ENCODE measurements at regions of chr4 and their contacts with region 1.

Region 1: DNA sequence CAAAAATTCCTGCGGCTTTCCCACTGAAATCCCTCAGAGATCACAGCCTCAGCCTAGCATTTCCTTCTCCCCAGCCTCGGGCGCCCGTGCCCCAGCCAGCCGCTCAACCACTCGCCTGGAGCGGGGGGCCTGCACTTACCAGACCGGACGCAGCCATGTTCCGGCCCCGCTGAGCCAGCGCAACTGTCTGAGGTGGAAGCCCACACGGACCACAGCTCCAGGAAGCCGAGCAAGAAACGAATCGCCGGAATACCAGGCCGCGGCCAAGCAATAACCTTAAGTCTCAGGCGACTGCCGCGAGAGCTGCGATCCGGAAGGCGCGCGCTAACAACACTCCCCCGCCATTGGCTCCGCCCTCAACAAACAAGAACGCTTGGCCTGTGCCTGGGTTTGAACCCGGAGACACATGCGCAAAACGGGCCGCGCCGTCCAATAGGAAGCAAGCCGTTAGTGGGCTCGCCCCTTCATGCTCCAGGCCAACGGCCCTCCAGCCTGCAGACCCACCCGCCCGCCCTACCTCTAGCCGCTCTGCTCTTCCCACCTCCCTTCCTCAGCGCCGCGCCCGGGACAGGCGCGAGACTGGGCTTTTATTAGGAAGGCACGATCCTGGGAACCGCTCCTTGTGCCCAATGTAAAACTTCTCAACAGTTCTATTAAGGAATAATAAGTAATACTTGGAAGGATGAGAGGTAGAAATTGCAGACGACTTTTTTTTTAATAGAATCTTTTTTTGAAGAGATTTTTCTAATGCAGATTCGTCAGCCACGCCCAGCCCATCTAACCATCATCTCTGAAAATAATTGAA is at the start of gene CENPC:
- DNase-seq: peak; percentile 93
- H3K4me3 Mint-ChIP-seq: peak within 1 kb of the TSS; percentile 100
- H3K27ac Mint-ChIP-seq: peak within 1 kb of the TSS; percentile 99
- H3K4me1 Mint-ChIP-seq: peaks cover 35% of the 10 kb centered on the region
- H3K27me3 Mint-ChIP-seq: no peaks in the 10 kb centered on the region
- total RNA-seq, gene CENPC: 31.6 and 32.0 TPM in 2 replicates

Region 2: GRCh38 chr4:67522851-67523671 is 22.3 kb before region 1 on chr4:
- intact Hi-C with region 1: loop called (anchors 1 kb)
- DNase-seq: no peak
- H3K4me3 Mint-ChIP-seq: peak overlapping the region; percentile 45
- H3K27ac Mint-ChIP-seq: peak overlapping the region; percentile 96
- H3K4me1 Mint-ChIP-seq: peaks cover 60% of the 10 kb centered on the region
- H3K27me3 Mint-ChIP-seq: no peaks in the 10 kb centered on the region

Region 3: DNA sequence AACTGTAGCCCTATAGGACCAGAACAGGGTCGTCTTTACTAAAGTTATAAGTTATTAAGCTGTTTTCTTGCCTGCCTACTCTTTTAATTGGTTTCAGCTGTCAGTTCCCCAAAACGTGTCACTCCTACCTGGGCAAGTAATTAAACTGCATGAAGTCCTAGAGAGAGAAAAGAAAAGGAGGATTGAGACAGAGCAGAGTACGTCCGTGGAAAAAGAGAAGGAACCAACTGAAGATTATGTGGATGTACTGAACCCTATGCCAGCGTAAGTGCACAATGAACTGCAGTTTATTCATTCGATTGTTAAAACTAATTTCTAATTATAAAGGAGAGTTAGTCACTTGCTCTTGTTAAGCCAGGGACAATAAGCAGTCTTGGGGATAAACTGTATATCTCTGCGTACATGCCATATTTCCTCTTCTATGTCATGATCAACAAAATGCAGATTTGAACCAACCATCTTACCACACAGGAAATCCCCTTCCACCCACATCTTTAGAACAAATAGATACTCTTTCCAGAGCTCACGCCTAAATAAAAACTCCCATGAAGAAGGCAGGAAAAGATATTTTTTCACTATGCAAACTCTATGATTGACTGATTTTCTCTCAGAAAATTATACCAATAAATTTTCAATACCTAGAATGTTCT is 35.9 kb after region 1 on chr4:
- intact Hi-C with region 1: loop called (anchors 2 kb)
- DNase-seq: no peak
- H3K4me3 Mint-ChIP-seq: peak overlapping the region; percentile 62
- H3K27ac Mint-ChIP-seq: peak overlapping the region; percentile 87
- H3K4me1 Mint-ChIP-seq: peaks cover 31% of the 10 kb centered on the region
- H3K27me3 Mint-ChIP-seq: no peaks in the 10 kb centered on the region

Region 4: GRCh38 chr4:67658302-67658701 is 112.9 kb after region 1 on chr4:
- intact Hi-C with region 1: loop called (anchors 5 kb)
- DNase-seq: no peak
- H3K4me3 Mint-ChIP-seq: no peak overlapping the region
- H3K27ac Mint-ChIP-seq: peak overlapping the region; percentile 35
- H3K4me1 Mint-ChIP-seq: peaks cover 10% of the 10 kb centered on the region
- H3K27me3 Mint-ChIP-seq: no peaks in the 10 kb centered on the region

Region 5: DNA sequence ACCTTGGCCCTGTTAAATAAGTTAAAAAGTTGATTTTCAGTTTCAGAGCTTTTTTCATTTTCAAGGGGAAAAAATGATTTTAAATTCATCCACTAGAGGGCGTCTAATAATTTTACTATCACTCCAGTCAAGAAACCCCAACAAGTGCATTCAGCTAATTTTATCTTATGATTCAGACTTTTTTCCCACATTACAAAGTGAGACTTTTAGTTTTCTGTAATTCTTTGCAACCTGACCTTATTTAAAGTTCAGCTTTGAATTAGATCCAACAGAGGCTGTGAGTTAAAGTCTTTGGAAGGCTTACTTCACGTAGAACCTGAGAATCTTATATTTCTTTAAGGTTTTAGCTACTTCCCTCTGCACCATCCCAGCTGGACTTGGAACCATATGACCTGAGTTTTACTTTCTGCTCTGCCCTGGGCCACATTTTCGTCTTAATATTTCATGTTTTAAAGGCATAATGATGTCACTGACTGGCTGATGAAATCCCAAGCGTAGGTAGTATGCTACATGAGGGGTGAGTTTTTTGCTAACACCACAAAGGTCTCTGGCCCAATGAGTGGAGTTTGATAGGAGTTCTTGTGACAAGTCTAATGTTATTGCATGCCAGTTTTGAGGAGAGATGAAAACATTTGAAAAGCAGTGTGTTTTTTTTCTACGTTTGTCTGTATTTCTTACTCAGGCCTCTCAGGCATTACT is 201.5 kb after region 1 on chr4:
- intact Hi-C with region 1: loop called (anchors 5 kb)
- DNase-seq: no peak
- H3K4me3 Mint-ChIP-seq: no peak overlapping the region
- H3K27ac Mint-ChIP-seq: peak overlapping the region; percentile 2
- H3K4me1 Mint-ChIP-seq: peaks cover 17% of the 10 kb centered on the region
- H3K27me3 Mint-ChIP-seq: no peaks in the 10 kb centered on the region

Region 6: DNA sequence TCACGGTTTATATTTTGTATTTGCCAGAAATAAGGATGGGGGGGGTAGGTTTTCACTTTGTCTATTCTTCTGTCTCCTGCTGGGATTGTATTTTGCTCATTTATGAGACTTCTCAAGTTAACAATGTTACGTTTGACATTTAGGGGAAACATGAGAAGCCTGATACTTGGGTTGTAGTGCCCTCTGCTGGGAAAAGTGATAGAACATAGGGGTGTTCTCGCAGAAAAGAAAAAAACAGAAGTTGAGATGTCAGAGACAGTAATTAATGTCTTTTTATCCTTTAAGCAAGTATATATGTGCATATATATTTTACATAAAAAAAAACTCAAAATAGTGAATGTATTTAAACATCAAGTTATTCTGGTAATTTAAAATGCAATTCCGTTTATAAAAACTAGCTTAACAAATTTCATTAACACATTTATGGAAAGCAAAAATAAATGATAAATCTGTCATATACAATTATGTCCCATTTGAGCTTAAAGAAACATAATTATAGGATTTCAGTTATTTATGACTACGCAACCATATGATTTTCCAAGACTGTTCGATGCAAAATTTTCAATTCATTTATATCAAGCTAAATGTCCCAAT is 630.3 kb after region 1 on chr4:
- intact Hi-C with region 1: loop called (anchors 1 kb)
- DNase-seq: peak; percentile 18
- H3K4me3 Mint-ChIP-seq: no peak overlapping the region
- H3K27ac Mint-ChIP-seq: no peak overlapping the region
- H3K4me1 Mint-ChIP-seq: peaks cover 6% of the 10 kb centered on the region
- H3K27me3 Mint-ChIP-seq: peaks cover 4% of the 10 kb centered on the region

Measured in activated T-helper 2 cell treated with anti-CD3 and anti-CD28 coated beads, Interferon-gamma antibody, Interleukin-2, Interleukin-4, amounts not matched to agents 10 μg/mL and 5 μg/mL and 100 μg/mL, durations not matched to agents 14 hours and 24 hours and 36 hours (primary cell).